Activated T-helper 2 cell treated with anti-CD3 and anti-CD28 coated beads, Interferon-gamma antibody, Interleukin-2, Interleukin-4, amounts not matched to agents 10 μg/mL and 5 μg/mL and 100 μg/mL, durations not matched to agents 14 hours and 24 hours and 36 hours (primary cell): ENCODE measurements at regions of chr14 and their contacts with region 1.

Region 1: DNA sequence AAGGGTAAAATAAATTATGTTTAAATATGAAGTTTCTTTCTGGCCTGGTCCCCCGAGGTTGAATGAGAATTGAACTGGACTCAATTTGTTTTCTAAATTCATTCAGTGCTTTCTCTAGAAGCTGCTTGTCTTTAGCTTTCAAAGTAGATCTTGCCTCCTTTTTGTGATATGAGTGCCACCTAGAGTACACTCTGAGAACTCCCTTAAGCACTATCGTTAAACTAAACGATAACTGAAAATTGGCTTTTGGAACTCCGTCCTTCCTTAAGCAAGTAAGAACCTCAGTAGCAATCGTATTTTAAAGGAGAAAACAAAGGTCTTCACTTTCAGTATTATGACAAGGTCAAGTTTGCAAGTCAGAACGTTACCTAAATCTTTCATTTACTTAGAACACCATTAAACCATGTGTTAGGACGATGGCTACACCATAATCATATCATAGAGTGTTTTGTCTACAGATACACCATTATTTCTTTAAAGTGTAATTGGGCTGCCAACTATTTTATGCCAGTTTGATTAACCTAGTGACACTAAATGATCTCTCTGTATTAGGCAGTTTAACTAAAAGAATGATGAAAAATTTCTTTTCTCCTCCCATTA is 364.8 kb downstream of the SNAPC1 start:
- DNase-seq: no peak
- H3K4me3 Mint-ChIP-seq: no peak overlapping the region
- H3K27ac Mint-ChIP-seq: no peak overlapping the region
- H3K4me1 Mint-ChIP-seq: no peaks in the 10 kb centered on the region
- H3K27me3 Mint-ChIP-seq: peaks cover 65% of the 10 kb centered on the region

Region 2: DNA sequence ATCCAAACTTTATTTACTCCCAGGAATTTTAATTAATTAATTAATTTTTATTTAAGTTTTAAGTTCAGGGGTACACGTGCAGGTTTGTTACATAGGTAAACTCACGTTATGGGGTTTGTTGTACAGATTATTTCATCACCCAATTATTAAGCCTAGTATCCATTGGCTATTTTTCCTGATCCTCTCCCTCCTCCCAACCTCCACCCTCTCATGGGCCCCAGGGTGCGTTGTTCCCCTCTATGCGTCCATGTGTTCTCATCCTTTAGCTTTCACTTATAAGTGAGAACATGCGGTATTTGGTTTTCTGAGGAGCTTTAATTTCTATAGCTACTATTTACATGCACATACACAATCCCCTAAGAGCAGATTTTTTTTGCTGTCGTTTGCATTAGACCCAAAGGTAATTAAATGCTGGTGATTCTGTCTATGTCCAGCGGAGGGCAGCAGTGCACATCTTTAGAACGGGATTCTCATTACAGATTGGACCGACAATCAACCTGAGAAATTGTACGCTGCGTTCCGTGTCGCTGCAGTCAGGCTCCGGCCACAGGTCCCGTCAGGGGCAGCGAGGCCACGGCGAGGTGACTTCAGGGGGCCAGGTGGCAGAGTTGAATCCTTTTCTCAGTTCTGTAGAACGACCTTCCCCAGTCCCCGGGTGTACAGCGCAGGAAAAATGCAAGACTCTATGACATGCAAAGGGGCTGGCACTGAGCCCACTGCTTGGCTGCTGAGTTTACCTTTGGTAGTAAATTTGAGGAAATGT is 857.5 kb before region 1 on chr14:
- intact Hi-C with region 1: loop called (anchors 5 kb)
- DNase-seq: peak; percentile 70
- H3K4me3 Mint-ChIP-seq: peak overlapping the region; percentile 54
- H3K27ac Mint-ChIP-seq: no peak overlapping the region
- H3K4me1 Mint-ChIP-seq: peaks cover 5% of the 10 kb centered on the region
- H3K27me3 Mint-ChIP-seq: peaks cover 57% of the 10 kb centered on the region

Region 3: GRCh38 chr14:61461808-61462275 is 665.1 kb before region 1 on chr14:
- intact Hi-C with region 1: loop called (anchors 2 kb)
- DNase-seq: no peak
- H3K4me3 Mint-ChIP-seq: no peak overlapping the region
- H3K27ac Mint-ChIP-seq: peak overlapping the region; percentile 29
- H3K4me1 Mint-ChIP-seq: peaks cover 44% of the 10 kb centered on the region
- H3K27me3 Mint-ChIP-seq: no peaks in the 10 kb centered on the region

Region 4: GRCh38 chr14:61860294-61860918 is 266.6 kb before region 1 on chr14:
- intact Hi-C with region 1: loop called (anchors 10 kb)
- DNase-seq: peak; percentile 56
- H3K4me3 Mint-ChIP-seq: no peak overlapping the region
- H3K27ac Mint-ChIP-seq: no peak overlapping the region
- H3K4me1 Mint-ChIP-seq: peaks cover 6% of the 10 kb centered on the region
- H3K27me3 Mint-ChIP-seq: peaks cover 40% of the 10 kb centered on the region

Region 5: GRCh38 chr14:61894452-61895077 is 232.4 kb before region 1 on chr14:
- intact Hi-C with region 1: loop called (anchors 2 kb)
- DNase-seq: peak; percentile 26
- H3K4me3 Mint-ChIP-seq: no peak overlapping the region
- H3K27ac Mint-ChIP-seq: no peak overlapping the region
- H3K4me1 Mint-ChIP-seq: peaks cover 15% of the 10 kb centered on the region
- H3K27me3 Mint-ChIP-seq: peaks cover 35% of the 10 kb centered on the region

Region 6: GRCh38 chr14:61925043-61925442 is 201.9 kb before region 1 on chr14:
- intact Hi-C with region 1: loop called (anchors 10 kb)
- DNase-seq: no peak
- H3K4me3 Mint-ChIP-seq: no peak overlapping the region
- H3K27ac Mint-ChIP-seq: no peak overlapping the region
- H3K4me1 Mint-ChIP-seq: no peaks in the 10 kb centered on the region
- H3K27me3 Mint-ChIP-seq: peaks cover 40% of the 10 kb centered on the region